B cell (primary cell): ENCODE measurements at regions of chr6 and their contacts with region 1.

Region 1: DNA sequence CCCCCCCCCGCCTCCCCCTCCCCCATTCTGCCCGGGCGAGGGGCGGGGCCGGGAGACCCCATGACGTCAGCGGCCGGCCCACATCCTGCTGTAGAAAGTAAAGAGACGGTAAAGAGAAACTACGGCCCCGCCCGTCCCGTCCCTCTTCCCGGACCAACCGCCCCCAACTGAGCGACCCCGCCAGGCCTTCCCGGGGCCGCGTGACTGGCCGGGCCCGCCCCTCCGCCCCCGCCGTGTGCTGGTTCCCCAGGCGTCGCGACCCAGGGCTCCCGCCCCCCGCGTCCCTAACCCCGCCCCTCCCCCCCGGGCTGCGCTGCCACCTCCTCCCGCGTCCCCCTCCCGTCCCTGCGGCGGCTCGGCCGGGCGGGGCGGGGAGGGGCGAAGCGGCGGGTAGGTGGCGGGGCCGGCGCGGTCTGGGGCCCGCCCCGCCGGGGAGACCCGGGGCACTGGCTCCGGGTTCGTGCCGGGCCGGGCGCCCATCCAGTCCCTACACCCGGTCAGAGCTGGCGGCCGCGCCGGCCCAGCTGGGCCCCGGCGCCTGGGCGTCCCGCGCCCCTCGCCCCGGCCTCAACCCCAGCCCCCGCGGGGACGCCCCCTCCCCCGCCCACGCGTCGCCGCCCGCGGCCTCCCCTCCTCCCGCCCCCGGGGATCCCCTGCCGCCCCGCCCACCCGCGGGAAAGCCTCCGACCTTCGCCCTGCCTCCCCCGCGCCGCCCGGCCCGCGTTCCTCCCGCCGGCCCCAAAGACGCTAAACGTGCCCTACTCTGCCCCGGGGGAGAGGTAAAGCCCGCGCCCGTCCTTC is 636 bp upstream of the HIVEP1 start:
- DNase-seq: peak; percentile 98
- ATAC-seq: peak; percentile 69
- H3K4me3 ChIP-seq: peak overlapping the region in 4 of 5 experiments; percentile 35 to 96 (median 88)
- H3K4me3 Mint-ChIP-seq: peak overlapping the region; percentile 84
- H3K27ac ChIP-seq: peak overlapping the region in 1 of 2 donors; percentile 96
- H3K27ac Mint-ChIP-seq: peak overlapping the region; percentile 93
- H3K4me1 ChIP-seq: peaks cover 23 to 24% of the 10 kb centered on the region in 2 donors
- H3K4me1 Mint-ChIP-seq: peaks cover 43% of the 10 kb centered on the region
- H3K27me3 ChIP-seq: no peaks in the 10 kb centered on the region
- H3K27me3 Mint-ChIP-seq: no peaks in the 10 kb centered on the region
- CTCF ChIP-seq: no peak

Region 2: DNA sequence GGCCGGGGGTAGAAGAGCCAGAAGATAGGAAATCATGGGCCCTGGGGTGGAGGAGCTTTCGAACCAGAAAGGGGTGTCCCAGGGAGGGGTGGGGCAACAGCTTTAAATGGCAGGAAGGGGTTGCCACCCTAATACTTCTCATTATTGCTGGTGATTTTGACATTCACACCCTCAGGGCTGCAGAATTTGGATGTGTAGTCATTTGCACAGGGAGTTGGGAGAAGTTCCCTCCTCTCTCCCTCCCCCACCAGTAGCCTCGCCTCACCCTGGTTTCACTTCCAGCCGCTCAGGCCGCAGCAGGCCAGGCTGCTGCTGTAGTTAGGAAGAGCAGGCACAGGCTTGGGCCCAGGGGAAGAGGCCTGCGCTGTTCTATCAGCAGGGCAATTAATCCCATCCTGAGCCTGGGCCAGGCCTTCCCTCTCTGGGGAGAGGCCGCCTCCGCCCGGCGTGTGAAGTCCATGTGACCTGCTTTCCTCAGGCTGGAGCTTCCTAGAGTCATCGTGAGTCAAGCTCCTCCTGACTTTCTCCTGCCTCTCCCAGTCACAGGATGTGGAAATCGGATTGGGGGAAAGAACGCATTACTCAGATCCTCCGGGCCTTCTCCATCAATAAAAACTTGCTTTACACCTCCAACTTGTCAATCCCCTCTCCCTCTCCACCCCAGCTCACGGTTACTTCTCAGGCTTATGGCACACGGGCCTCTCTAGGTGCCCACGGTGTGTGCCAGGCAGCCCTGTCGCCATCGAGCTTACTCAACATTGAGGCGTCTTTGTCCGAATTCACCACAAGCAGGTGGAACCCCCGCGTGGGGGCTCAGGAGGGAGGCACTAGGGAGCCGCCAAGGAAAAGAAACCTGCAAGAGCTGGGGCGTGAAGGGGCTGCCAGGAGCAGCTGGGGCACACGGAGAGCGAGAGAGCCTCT is 240.7 kb before region 1 on chr6:
- CTCF ChIA-PET with region 1: no interaction called
- POLR2A ChIA-PET with region 1: no interaction called
- intact Hi-C with region 1: no loop called
- DNase-seq: peak; percentile 9
- ATAC-seq: no peak
- H3K4me3 ChIP-seq: no peak overlapping the region
- H3K4me3 Mint-ChIP-seq: no peak overlapping the region
- H3K27ac ChIP-seq: no peak overlapping the region
- H3K27ac Mint-ChIP-seq: no peak overlapping the region
- H3K4me1 ChIP-seq: no peaks in the 10 kb centered on the region
- H3K4me1 Mint-ChIP-seq: no peaks in the 10 kb centered on the region
- H3K27me3 ChIP-seq: peaks cover 0 to 2% (median 1%) of the 10 kb centered on the region in 4 experiments
- H3K27me3 Mint-ChIP-seq: peaks cover 29% of the 10 kb centered on the region
- CTCF ChIP-seq: no peak

Region 3: GRCh38 chr6:11824986-11825385 is 186.5 kb before region 1 on chr6:
- CTCF ChIA-PET with region 1: interaction called, 5 read pairs
- POLR2A ChIA-PET with region 1: interaction called, 5 read pairs
- intact Hi-C with region 1: loop called (anchors 5 kb)
- DNase-seq: peak; percentile 28
- ATAC-seq: peak; percentile 56
- H3K4me3 ChIP-seq: no peak overlapping the region
- H3K4me3 Mint-ChIP-seq: no peak overlapping the region
- H3K27ac ChIP-seq: no peak overlapping the region
- H3K27ac Mint-ChIP-seq: no peak overlapping the region
- H3K4me1 ChIP-seq: peaks cover 14 to 16% of the 10 kb centered on the region in 2 donors
- H3K4me1 Mint-ChIP-seq: peaks cover 30% of the 10 kb centered on the region
- H3K27me3 ChIP-seq: no peaks in the 10 kb centered on the region
- H3K27me3 Mint-ChIP-seq: no peaks in the 10 kb centered on the region
- CTCF ChIP-seq: no peak

Region 4: GRCh38 chr6:11947063-11947974 is 64.2 kb before region 1 on chr6:
- CTCF ChIA-PET with region 1: no interaction called
- POLR2A ChIA-PET with region 1: no interaction called
- intact Hi-C with region 1: loop called (anchors 5 kb)
- DNase-seq: peak; percentile 23
- ATAC-seq: no peak
- H3K4me3 ChIP-seq: no peak overlapping the region
- H3K4me3 Mint-ChIP-seq: no peak overlapping the region
- H3K27ac ChIP-seq: no peak overlapping the region
- H3K27ac Mint-ChIP-seq: no peak overlapping the region
- H3K4me1 ChIP-seq: no peaks in the 10 kb centered on the region
- H3K4me1 Mint-ChIP-seq: no peaks in the 10 kb centered on the region
- H3K27me3 ChIP-seq: peaks cover 0 to 3% (median 0%) of the 10 kb centered on the region in 4 experiments
- H3K27me3 Mint-ChIP-seq: peaks cover 4% of the 10 kb centered on the region
- CTCF ChIP-seq: peak; percentile 41

Region 5: GRCh38 chr6:12060780-12061619 is 49.5 kb after region 1 on chr6:
- CTCF ChIA-PET with region 1: interaction called, 7 read pairs
- POLR2A ChIA-PET with region 1: interaction called, 7 read pairs
- intact Hi-C with region 1: loop called (anchors 1 kb)
- DNase-seq: peak; percentile 91
- ATAC-seq: peak; percentile 90
- H3K4me3 ChIP-seq: peak overlapping the region in 4 of 5 experiments; percentile 23 to 58 (median 40)
- H3K4me3 Mint-ChIP-seq: peak overlapping the region; percentile 91
- H3K27ac ChIP-seq: peak overlapping the region; percentile 47 to 69
- H3K27ac Mint-ChIP-seq: peak overlapping the region; percentile 98
- H3K4me1 ChIP-seq: peaks cover 48 to 51% of the 10 kb centered on the region in 2 donors
- H3K4me1 Mint-ChIP-seq: peaks cover 68% of the 10 kb centered on the region
- H3K27me3 ChIP-seq: no peaks in the 10 kb centered on the region
- H3K27me3 Mint-ChIP-seq: no peaks in the 10 kb centered on the region
- CTCF ChIP-seq: no peak

Region 6: DNA sequence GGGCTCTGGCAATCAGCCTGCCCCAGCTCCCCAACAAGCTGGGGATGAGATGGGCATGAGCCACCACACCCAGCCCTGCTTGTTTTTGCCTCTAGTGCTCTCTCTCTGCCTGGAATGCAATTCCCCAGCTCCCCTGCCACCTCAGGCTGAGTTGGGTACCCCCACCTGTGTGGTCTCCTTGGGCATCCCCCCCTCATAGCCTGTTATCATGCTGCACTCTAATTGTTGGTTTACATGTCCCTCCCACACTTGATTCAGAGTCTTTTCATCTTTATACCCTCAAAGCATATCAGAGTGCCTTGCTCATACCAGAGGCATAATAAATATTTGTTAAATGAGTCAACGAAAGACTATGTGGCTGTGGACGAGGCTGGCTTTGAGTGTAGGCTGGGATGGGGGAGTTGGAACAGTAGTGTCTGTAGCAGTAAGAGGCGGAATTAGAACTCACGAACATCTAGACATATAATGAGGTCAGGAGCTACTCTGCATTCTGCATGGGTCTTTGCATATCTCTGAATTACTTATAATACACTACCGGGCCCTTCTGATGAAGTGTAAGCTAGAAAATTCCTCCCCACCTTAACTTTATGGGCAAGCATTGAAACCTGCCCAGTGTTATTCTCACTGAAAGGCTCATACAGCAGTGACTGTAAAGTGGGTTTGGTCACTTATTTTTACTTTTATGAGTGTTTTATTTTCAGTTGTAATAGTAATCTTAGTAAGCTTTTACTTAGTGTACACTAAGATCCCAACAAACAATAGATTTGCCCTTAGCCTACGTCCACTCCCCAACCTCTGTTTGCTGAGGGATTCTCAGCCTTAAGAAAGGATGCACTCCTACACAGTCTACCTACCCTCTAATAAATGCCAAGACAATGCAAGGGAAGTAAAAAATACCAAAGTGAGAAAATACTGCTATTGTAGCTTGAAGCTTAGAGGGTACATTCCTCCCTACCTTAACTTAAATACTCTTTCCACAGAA is 337.3 kb after region 1 on chr6:
- CTCF ChIA-PET with region 1: no interaction called
- POLR2A ChIA-PET with region 1: no interaction called
- intact Hi-C with region 1: no loop called
- DNase-seq: no peak
- ATAC-seq: no peak
- H3K4me3 ChIP-seq: no peak overlapping the region
- H3K4me3 Mint-ChIP-seq: no peak overlapping the region
- H3K27ac ChIP-seq: no peak overlapping the region
- H3K27ac Mint-ChIP-seq: no peak overlapping the region
- H3K4me1 ChIP-seq: no peaks in the 10 kb centered on the region
- H3K4me1 Mint-ChIP-seq: no peaks in the 10 kb centered on the region
- H3K27me3 ChIP-seq: peaks cover 0 to 2% (median 0%) of the 10 kb centered on the region in 4 experiments
- H3K27me3 Mint-ChIP-seq: peaks cover 16% of the 10 kb centered on the region
- CTCF ChIP-seq: no peak